OCI-LY7 (cell line): ENCODE measurements at regions of chr6 and their contacts with region 1.

Region 1: GRCh38 chr6:150395398-150396009 is 26.7 kb downstream of the IYD start:
- DNase-seq: peak; percentile 82
- H3K4me3 ChIP-seq: no peak overlapping the region
- H3K27ac ChIP-seq: no peak overlapping the region
- H3K4me1 ChIP-seq: no peaks in the 10 kb centered on the region
- CTCF ChIP-seq: peak; percentile 91

Region 2: GRCh38 chr6:150079604-150080003 is 315.9 kb before region 1 on chr6:
- CTCF ChIA-PET with region 1: interaction called, 6 read pairs
- POLR2A ChIA-PET with region 1: interaction called, 5 read pairs
- intact Hi-C with region 1: loop called (anchors 1 kb)
- DNase-seq: peak; percentile 24
- H3K4me3 ChIP-seq: no peak overlapping the region
- H3K27ac ChIP-seq: no peak overlapping the region
- H3K4me1 ChIP-seq: no peaks in the 10 kb centered on the region
- CTCF ChIP-seq: no peak

Region 3: DNA sequence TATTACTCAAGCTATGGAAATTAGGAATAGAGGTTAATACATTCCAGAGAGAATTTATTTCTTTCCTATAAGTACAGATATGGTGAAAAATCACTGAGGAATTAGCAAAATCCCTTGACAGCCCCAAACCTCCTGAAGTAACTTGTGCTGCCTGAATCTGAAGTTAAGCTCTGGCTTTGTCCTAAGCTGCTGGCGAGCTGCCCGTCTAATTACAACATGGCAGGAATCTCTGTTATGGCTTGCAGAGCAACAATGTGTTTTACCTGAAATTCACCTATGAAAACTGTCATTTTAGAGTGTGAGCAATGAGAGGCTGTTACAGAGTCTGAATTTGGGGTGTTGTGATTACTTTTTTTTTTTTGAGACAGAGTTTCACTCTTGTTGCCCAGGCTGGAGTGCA is 49.2 kb before region 1 on chr6:
- CTCF ChIA-PET with region 1: no interaction called
- POLR2A ChIA-PET with region 1: interaction called, 4 read pairs
- intact Hi-C with region 1: loop called (anchors 2 kb)
- DNase-seq: no peak
- H3K4me3 ChIP-seq: no peak overlapping the region
- H3K27ac ChIP-seq: no peak overlapping the region
- H3K4me1 ChIP-seq: peaks cover 36% of the 10 kb centered on the region
- CTCF ChIP-seq: no peak

Region 4: DNA sequence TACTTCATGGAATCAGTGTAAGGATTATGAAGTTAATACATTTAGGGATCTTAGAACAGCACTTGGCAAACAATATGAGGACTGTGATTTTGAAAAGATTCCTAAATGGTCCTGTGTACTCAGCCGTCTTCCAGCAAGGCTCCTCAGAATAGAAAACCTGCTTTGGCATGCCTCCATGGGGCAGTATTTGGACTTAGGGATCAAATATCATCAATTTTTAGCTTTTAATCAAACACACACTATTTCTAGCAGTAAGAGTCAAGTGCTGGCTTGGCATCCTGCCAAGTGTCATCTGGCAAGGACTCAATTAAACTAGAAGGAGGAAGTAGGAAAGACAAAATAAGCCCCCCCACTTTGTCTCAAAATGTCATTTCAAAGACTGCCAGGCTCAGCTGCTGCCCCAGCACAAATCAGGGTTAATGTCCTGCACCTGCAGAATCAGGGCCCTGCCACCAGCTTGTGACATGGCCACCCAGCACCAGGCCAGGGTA is 14.1 kb after region 1 on chr6:
- CTCF ChIA-PET with region 1: interaction called, 4 read pairs
- POLR2A ChIA-PET with region 1: interaction called, 12 read pairs
- intact Hi-C with region 1: no loop called
- DNase-seq: peak; percentile 94
- H3K4me3 ChIP-seq: peak overlapping the region; percentile 27
- H3K27ac ChIP-seq: peak overlapping the region; percentile 61
- H3K4me1 ChIP-seq: peaks cover 43% of the 10 kb centered on the region
- CTCF ChIP-seq: no peak